G401 (cell line): ENCODE measurements at regions of chr10 and their contacts with region 1.

Region 1: GRCh38 chr10:103491493-103492381 is 1.8 kb upstream of the NEURL1 start:
- DNase-seq: no peak

Region 2: DNA sequence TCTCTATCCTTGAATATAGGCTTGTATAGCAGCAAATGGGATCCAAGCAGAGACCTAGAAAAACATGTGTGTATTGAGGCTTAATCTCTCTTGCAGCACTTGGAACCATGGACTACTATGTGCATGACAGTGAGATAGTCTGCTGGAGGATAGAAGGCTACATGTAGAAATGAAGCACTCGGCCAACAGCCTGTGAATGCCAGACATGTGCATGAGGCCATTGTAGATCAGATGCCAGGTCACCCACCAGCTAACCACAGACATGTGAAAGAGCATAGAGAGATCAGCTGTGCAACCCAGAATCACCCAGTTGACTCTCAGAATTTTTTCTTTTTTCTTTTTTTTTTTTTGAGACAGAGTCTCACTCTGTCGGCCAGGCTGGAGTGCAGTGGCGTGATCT is 389.5 kb before region 1 on chr10:
- in situ Hi-C with region 1: no loop called
- DNase-seq: no peak

Region 3: DNA sequence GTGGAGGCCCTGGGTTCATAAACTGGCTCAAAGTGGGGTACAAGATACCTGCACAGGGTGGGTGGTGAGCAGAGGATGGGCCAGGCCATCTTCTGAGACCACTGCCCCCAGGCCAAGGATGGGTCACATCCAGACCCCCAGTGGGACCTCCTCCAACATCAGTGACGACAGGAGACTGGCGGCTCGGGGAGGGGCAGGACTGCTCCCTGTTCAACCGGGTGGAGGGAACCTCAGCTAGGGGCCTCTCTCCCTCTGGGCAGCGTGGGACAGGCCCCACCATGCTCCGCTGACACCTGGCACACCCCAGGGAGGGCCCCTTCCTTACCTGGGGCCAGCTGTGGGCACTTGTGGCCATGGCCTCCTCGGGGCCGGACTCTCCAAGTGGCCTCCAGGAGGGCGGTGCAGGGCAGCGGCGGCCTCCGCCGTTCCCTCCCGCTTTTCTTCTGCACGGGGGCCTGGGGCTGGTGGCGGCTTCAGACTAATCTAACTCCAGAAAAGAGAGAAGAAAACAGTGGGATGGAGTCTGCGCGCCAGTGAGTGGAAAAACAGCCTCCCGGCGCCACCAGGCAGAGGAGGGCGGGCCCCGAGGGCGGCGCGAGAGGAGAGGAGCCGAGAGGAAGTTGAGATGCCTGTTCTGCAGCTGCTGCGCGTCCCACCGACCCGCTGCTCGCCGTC is 39.8 kb before region 1 on chr10 and contains the start of gene CALHM2:
- in situ Hi-C with region 1: loop called (anchors 5 kb)
- DNase-seq: peak; percentile 17
- total RNA-seq, gene CALHM2: 0.68 and 2.0 TPM in 2 replicates